Cardiac septum (tissue), 1 donor: ENCODE measurements at regions of chr6 and their contacts with region 1.

Region 1: GRCh38 chr6:3258720-3259490 is at the start of gene PSMG4:
- DNase-seq: peak; percentile 99
- total RNA-seq, gene PSMG4: 8.8 TPM

Region 2: DNA sequence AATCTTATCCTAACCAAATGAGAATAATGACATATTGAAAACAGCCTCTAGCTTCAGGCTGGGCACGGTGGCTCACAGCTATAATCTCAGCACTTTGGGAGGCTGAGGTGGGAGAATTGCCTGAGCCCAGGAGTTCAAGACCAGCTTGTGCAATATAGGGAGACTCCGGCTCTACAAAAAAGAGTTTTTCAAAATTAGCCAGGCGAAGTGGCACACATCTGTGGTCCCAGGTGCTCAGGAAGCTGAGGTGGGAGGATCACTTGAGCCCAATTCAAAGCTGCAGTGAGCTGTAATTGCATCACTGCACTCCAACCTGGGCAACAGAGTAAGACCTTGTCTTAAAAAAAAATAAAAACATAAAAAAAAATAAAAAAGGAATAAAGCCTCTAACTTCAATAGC is 106.2 kb before region 1 on chr6:
- intact Hi-C with region 1: no loop called
- DNase-seq: no peak

Region 3: DNA sequence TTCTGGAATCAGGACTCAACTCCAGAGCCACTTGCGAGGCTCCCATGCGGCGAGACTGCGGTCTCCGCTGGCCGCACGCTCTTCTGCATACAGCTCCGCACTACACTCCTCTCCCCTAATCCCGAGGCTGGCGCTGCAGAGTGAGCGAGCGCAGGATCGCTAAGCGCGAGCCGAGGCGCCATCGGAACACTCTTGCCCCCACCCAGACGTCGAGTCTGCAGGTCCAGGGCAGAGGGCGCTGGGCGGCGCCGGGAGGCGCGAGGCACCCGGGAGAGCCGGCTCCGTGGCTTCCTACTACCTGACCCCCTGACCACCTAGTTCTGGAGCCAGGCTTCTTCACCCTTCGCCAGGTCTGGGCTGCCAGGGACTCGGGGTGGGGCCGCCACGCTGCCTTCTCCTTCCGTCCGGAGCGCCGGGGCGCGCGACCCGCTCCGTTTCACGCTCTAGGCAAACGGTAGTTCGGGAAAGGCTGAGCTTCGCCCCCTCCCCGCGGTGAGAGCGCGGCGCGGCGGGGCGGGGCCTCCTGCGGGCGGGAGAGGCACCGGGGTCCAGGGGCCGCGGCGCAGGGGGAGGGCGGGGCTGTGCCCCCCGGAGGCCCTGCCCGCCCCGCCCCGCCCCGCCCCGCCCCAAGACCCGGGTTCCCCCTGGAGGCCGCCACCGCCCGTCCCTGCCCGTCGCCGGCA is 96.2 kb before region 1 on chr6:
- intact Hi-C with region 1: loop called (anchors 2 kb)
- DNase-seq: peak; percentile 81